ENCODE measurements at regions of chr19 and their contacts with region 1.

Region 1: GRCh38 chr19:42468273-42468796 is 25.6 kb upstream of the CXCL17 start:
- DNase-seq: no peak
- H3K4me3 ChIP-seq: no peak overlapping the region
- H3K27ac ChIP-seq: no peak overlapping the region
- H3K4me1 ChIP-seq: peaks cover 12% of the 10 kb centered on the region
- H3K27me3 ChIP-seq: no peaks in the 10 kb centered on the region
- CTCF ChIP-seq: no peak
- POLR2A ChIP-seq: no peak

Region 2: GRCh38 chr19:42295831-42296525 is 172.4 kb before region 1 on chr19:
- intact Hi-C with region 1: no loop called
- DNase-seq: no peak
- H3K4me3 ChIP-seq: no peak overlapping the region
- H3K27ac ChIP-seq: no peak overlapping the region
- H3K4me1 ChIP-seq: no peaks in the 10 kb centered on the region
- H3K27me3 ChIP-seq: no peaks in the 10 kb centered on the region
- CTCF ChIP-seq: peak; percentile 86 to 94 (median 88)
- POLR2A ChIP-seq: no peak

Region 3: GRCh38 chr19:42529248-42529764 is 61.0 kb after region 1 on chr19:
- intact Hi-C with region 1: loop called (anchors 10 kb)
- DNase-seq: no peak
- H3K4me3 ChIP-seq: no peak overlapping the region
- H3K27ac ChIP-seq: peak overlapping the region; percentile 31
- H3K4me1 ChIP-seq: peaks cover 15% of the 10 kb centered on the region
- H3K27me3 ChIP-seq: no peaks in the 10 kb centered on the region
- CTCF ChIP-seq: peak; percentile 39 to 60 (median 58)
- POLR2A ChIP-seq: no peak